Transverse colon (tissue), 4 donors: ENCODE measurements at regions of chr13 and their contacts with region 1.

Region 1: GRCh38 chr13:72884101-72884500 is 102.2 kb downstream of the PIBF1 start:
- DNase-seq: no peak
- H3K4me3 ChIP-seq: no peak overlapping the region
- H3K27ac ChIP-seq: no peak overlapping the region
- H3K4me1 ChIP-seq: peaks cover 0 to 20% (median 2%) of the 10 kb centered on the region in 4 donors
- H3K27me3 ChIP-seq: no peaks in the 10 kb centered on the region
- CTCF ChIP-seq: no peak
- EP300 ChIP-seq: no peak
- POLR2A ChIP-seq: no peak

Region 2: GRCh38 chr13:73200406-73200805 is 316.3 kb after region 1 on chr13:
- in situ Hi-C with region 1: no loop called
- intact Hi-C with region 1: no loop called
- DNase-seq: no peak
- H3K4me3 ChIP-seq: no peak overlapping the region
- H3K27ac ChIP-seq: no peak overlapping the region
- H3K4me1 ChIP-seq: peaks cover 0 to 16% (median 6%) of the 10 kb centered on the region in 4 donors
- H3K27me3 ChIP-seq: no peaks in the 10 kb centered on the region
- CTCF ChIP-seq: no peak
- EP300 ChIP-seq: no peak
- POLR2A ChIP-seq: no peak

Region 3: DNA sequence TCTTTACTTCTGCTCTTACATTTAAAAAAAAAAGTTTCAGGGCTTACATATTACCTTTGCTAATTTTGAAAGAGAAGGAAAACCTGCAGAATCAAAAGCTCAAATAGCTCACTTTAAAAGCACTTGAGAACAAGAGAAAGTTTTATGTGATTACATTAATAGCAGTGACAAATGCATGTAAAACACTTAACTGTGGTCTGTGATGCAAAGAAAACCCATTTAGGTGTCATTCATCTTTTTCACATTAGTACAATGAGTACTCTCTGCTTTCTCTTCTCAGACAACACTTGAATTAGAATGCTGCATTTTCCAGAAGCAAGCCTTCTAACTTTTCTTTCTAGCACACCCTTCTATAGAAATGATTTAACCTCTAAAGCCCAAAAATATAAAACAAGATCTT is 635.6 kb after region 1 on chr13:
- in situ Hi-C with region 1: no loop called
- intact Hi-C with region 1: loop called (anchors 5 kb)
- DNase-seq: no peak
- H3K4me3 ChIP-seq: no peak overlapping the region
- H3K27ac ChIP-seq: no peak overlapping the region
- H3K4me1 ChIP-seq: peaks cover 0 to 7% (median 5%) of the 10 kb centered on the region in 4 donors
- H3K27me3 ChIP-seq: no peaks in the 10 kb centered on the region
- CTCF ChIP-seq: no peak
- EP300 ChIP-seq: no peak
- POLR2A ChIP-seq: no peak